Sigmoid colon (tissue), 7 donors: ENCODE measurements at regions of chr10 and their contacts with region 1.

Region 1: DNA sequence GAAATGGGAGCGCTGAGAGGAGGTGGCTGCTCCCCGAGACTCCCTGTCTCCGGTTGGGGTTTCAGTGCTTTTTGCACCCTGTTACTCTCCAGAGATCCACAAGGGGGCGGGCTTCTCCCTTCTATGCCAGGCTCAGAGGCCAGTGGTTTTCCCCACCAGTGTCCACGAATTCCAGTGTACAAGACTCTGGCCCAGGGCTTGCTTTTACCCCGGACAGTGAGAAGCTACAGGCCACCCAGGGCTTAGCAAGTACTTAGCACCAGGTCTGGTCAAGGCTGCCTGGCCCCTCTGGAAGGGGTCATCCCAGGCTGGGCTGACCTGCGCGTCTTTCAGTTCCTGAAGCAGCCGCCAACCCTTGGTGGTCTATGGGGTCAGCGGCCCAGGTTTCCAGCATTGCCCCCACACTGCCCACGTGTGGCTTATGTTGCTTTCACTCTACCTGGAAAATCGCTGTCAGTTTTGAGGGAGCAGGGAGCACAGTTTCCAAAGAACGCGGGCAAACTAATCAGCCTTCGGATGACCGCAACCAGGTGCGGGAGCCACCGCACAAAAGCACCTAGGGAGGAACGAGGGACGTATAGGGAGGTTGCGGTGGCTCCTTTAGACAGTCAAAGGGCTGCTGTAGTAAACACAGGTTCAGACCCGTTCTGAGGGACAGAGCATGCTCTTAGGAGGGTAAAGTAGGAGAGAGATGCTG is 6.8 kb downstream of the CYP26A1 start:
- DNase-seq: no peak
- H3K4me3 ChIP-seq: no peak overlapping the region
- H3K27ac ChIP-seq: no peak overlapping the region
- H3K4me1 ChIP-seq: peaks cover 0 to 4% (median 0%) of the 10 kb centered on the region in 4 donors
- H3K27me3 ChIP-seq: peaks cover 0 to 41% (median 11%) of the 10 kb centered on the region in 3 donors
- CTCF ChIP-seq: peak in 3 of 4 experiments; percentile 58 to 77 (median 63)
- EP300 ChIP-seq: no peak
- POLR2A ChIP-seq: no peak

Region 2: DNA sequence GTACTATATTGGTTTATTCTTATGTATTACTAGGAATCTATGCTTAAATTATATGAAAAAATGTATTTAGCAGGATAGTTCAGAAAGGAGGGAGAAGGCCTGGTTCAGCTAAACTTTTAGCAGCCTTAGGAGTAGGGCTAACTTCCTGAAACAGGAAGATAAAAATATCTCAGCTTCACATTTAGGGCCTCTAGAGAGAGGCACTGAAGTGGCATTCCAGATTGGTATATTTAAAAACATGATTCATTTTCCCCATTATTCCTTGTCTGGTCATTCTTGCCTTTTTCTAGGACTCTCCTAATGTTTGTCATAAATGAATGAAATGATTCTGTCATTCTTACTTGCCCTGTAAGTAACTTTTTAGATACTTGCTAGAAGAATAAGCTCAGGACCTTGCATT is 82.9 kb before region 1 on chr10:
- intact Hi-C with region 1: no loop called
- DNase-seq: no peak
- H3K4me3 ChIP-seq: no peak overlapping the region
- H3K27ac ChIP-seq: no peak overlapping the region
- H3K4me1 ChIP-seq: no peaks in the 10 kb centered on the region
- H3K27me3 ChIP-seq: no peaks in the 10 kb centered on the region
- CTCF ChIP-seq: no peak
- EP300 ChIP-seq: no peak
- POLR2A ChIP-seq: no peak

Region 3: DNA sequence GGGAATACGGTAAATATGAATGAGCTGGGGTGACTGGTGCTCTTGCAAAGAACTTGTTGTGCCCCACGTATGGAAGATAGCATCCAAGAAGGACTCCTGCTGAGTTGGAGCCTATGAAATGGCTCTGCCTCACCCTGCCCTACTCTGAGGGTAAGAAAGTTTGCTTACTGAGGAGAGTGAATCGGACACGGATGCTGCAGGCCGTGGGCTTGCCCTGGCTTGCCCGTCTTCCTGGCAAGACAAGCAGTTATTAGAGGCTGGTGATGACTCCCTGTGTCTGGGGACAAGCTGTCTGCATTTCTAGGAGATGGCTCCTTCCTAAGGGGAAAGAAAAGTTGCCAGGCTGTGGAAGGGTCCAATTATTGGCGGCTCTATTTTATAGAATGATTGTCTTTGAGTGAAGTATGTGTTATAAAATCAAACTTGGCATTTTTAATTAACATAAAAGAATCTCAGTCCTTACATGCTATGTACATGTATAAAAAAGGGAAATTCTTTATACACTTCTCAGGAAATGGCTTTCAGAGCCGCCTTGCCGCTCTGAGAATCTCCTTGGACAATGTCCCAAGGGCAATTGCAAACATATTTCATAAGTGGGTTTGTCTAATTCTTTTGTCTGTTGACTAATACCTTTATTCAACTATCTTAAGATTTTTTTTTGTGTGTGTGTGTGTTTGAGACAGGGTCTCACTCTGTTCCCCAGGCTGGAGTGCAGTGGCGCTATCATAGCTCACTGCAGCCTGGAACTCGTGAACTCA is 57.8 kb after region 1 on chr10:
- intact Hi-C with region 1: no loop called
- DNase-seq: no peak
- H3K4me3 ChIP-seq: no peak overlapping the region
- H3K27ac ChIP-seq: no peak overlapping the region
- H3K4me1 ChIP-seq: no peaks in the 10 kb centered on the region
- H3K27me3 ChIP-seq: peaks cover 0 to 5% (median 0%) of the 10 kb centered on the region in 3 donors
- CTCF ChIP-seq: no peak
- EP300 ChIP-seq: no peak
- POLR2A ChIP-seq: no peak

Region 4: GRCh38 chr10:93288654-93289634 is 208.4 kb after region 1 on chr10:
- intact Hi-C with region 1: loop called (anchors 10 kb)
- DNase-seq: peak; percentile 74
- H3K4me3 ChIP-seq: no peak overlapping the region
- H3K27ac ChIP-seq: no peak overlapping the region
- H3K4me1 ChIP-seq: peaks cover 0 to 5% (median 0%) of the 10 kb centered on the region in 4 donors
- H3K27me3 ChIP-seq: no peaks in the 10 kb centered on the region
- CTCF ChIP-seq: peak; percentile 16 to 74 (median 64)
- EP300 ChIP-seq: no peak
- POLR2A ChIP-seq: no peak